G401 (cell line): ENCODE measurements at regions of chr12 and their contacts with region 1.

Region 1: DNA sequence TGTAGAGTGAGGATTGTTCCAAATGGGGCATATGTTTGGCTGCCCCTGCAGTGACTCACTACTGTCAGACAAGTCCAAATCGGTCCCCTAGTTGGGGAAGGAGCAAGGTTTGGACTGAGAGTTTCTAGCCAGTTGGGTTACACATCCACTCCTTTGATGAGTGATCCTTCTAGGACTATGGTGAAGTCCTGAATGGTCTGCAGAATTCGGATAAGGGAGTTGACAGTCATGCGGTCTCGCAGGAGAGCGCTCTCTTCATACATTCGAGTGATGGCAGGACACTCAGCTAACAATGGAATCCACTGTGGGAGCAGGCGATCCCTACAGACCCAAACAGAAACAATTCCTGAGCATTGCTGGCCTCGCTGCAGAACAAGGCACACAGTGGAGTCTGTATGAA is 61.5 kb upstream of the SINHCAF start:
- DNase-seq: peak; percentile 85

Region 2: DNA sequence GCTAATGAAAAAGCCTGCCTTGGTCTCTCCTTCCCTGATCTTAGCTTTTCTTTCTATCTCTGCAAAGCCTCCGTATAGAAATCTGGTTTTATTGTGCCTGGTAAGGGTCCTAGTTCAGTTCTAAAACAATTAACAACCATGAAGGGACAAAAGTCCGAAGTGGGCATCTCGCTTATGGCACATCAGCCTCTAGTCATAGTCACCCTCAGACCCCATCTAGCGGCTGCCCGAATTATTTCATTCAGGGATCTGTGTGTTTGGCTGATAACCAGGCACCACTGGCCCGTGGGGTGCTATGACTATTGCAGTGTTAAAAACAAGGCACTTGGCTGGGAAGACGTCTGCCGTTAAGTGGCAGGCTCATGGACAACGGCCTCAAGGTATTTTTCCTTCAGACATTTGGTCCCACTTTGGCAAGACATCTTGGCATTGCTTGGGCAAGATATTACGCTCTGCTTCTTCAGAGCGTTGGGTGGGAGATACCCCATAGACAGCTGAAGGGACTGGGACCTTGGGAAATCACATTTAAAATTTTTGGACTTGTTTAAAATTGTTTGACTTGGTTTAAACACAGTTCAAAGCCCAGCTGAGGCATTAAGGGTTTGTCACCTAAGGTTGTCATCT is 148.6 kb before region 1 on chr12:
- in situ Hi-C with region 1: no loop called
- DNase-seq: peak; percentile 59

Region 3: DNA sequence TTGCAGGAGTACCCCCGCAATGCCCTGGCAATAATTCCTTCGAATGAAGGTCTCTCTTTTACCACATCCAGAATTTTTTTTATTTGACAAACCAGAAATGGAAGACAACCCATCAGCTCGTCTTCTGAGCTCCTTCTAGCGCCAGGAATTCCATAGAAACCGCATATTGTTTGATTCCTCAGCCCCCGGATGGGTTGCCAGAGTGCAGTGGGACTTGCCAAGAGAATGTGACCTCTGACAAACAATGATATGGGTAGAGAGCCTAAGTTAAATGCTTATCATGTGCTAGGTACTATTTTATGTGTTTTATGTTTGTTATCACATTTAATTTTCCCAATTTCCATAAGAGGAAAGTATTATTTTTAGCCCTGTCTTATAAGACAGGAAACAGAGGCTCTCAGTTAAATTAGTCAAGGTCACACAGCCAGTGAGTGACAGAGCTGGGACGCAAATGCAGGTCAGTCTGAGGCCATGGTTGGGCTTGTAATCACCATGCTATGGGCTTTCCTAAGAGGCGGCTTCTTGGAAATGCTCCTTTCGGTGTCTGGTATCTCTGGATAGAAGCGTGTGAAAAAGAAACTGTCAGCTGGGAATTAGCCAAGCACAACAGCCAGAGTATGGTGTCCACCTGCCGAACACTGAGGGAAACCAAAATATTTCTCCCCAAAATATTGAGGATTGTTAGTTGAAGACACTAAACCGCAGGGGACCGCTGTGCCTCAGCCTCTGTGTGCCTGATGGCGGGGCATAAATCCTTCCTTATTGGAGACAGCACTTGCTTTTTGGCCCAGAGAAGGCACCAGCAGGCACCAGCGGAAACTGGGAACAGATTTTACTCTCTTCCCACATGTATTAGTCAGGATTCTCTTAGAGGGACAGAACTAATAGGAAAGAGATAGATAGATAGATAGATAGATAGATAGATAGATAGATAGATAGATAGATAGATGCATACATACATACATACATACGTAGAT is 242.6 kb after region 1 on chr12:
- in situ Hi-C with region 1: loop called (anchors 25 kb)
- DNase-seq: peak; percentile 75